Caco-2 (cell line): ENCODE measurements at regions of chr4 and their contacts with region 1.

Region 1: GRCh38 chr4:43471950-43472349 is 579.4 kb downstream of the GRXCR1 start:
- DNase-seq: no peak
- H3K4me3 ChIP-seq: no peak overlapping the region
- H3K4me3 Mint-ChIP-seq: no peak overlapping the region
- H3K27ac Mint-ChIP-seq: no peak overlapping the region
- H3K4me1 ChIP-seq: no peaks in the 10 kb centered on the region
- H3K4me1 Mint-ChIP-seq: no peaks in the 10 kb centered on the region
- H3K27me3 ChIP-seq: no peaks in the 10 kb centered on the region
- H3K27me3 Mint-ChIP-seq: no peaks in the 10 kb centered on the region
- CTCF ChIP-seq: no peak

Region 2: DNA sequence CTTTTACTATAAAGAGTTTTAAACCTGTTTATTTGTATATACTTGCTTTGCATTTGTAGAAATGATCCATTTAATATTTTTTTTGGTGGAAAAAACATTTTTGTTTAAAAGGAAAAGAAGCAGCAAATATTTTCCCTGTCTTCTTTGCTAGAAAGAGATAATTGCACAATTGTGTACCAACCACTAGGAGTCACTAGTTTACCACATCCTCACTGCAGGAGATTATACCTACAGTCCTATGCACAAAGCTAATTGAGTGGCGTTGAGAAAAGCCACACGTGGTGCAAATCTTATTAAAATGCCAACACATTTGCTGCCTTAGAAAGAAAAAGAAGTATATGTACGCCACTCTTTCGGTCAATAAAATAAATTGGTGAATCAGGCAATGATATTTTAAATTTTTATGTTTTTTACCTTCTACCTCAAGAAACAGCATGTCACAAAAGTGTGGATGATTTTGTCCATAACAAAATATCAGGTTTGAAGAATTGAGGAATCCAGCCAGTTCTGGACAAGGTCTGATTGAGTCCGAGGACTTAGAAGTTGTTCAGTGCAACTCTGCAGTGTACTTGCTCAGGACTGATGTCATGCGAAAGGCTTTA is 476.5 kb before region 1 on chr4:
- CTCF ChIA-PET with region 1: no interaction called
- POLR2A ChIA-PET with region 1: no interaction called
- intact Hi-C with region 1: loop called (anchors 5 kb)
- DNase-seq: peak in 1 of 2 experiments; percentile 16
- H3K4me3 ChIP-seq: no peak overlapping the region
- H3K4me3 Mint-ChIP-seq: no peak overlapping the region
- H3K27ac Mint-ChIP-seq: no peak overlapping the region
- H3K4me1 ChIP-seq: no peaks in the 10 kb centered on the region
- H3K4me1 Mint-ChIP-seq: no peaks in the 10 kb centered on the region
- H3K27me3 ChIP-seq: no peaks in the 10 kb centered on the region
- H3K27me3 Mint-ChIP-seq: no peaks in the 10 kb centered on the region
- CTCF ChIP-seq: peak; percentile 56 to 58